BJ (cell line): ENCODE measurements at regions of chr1 and their contacts with region 1.

Region 1: GRCh38 chr1:172955161-172955815 is 95.5 kb downstream of the TNFSF18 start:
- DNase-seq: peak; percentile 97
- H3K4me3 ChIP-seq: no peak overlapping the region
- H3K27me3 ChIP-seq: no peaks in the 10 kb centered on the region
- CTCF ChIP-seq: no peak

Region 2: GRCh38 chr1:172895050-172895460 is 60.2 kb before region 1 on chr1:
- CTCF ChIA-PET with region 1: no interaction called
- POLR2A ChIA-PET with region 1: interaction called, 11 read pairs
- DNase-seq: no peak
- H3K4me3 ChIP-seq: no peak overlapping the region
- H3K27me3 ChIP-seq: no peaks in the 10 kb centered on the region
- CTCF ChIP-seq: no peak

Region 3: GRCh38 chr1:172906778-172907592 is 48.3 kb before region 1 on chr1:
- CTCF ChIA-PET with region 1: interaction called, 4 read pairs
- POLR2A ChIA-PET with region 1: interaction called, 10 read pairs
- DNase-seq: peak; percentile 68
- H3K4me3 ChIP-seq: no peak overlapping the region
- H3K27me3 ChIP-seq: no peaks in the 10 kb centered on the region
- CTCF ChIP-seq: no peak

Region 4: GRCh38 chr1:173202430-173203145 is 247.3 kb after region 1 on chr1:
- CTCF ChIA-PET with region 1: interaction called, 15 read pairs
- POLR2A ChIA-PET with region 1: no interaction called
- DNase-seq: peak; percentile 77
- H3K4me3 ChIP-seq: no peak overlapping the region
- H3K27me3 ChIP-seq: no peaks in the 10 kb centered on the region
- CTCF ChIP-seq: peak; percentile 67

Region 5: DNA sequence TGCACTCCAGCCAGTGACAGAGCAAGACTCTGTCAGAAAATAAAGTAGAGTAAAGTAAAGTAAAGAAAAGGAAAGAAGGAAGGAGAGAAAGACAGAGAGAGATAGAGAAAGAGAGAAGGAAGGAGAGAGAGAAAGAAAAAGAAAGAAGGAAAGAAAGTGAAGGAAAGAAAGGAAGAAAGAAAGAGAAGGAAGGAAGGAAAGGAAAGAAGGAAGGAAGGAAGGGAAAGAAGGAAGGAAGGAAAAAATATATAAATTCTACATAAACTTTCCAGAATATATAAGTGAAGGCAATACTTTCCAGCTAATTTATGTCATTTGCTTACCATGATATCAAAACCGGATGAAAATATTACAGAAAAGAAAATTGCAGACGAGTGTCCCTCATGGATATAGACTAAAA is 1420.7 kb after region 1 on chr1:
- CTCF ChIA-PET with region 1: no interaction called
- POLR2A ChIA-PET with region 1: no interaction called
- DNase-seq: no peak
- H3K4me3 ChIP-seq: no peak overlapping the region
- H3K27me3 ChIP-seq: no peaks in the 10 kb centered on the region
- CTCF ChIP-seq: no peak